ENCODE measurements at regions of chr5 and their contacts with region 1.

Region 1: GRCh38 chr5:93255796-93256195 is 325.2 kb downstream of the NR2F1-AS1 start:
- DNase-seq: no peak
- ATAC-seq: no peak
- H3K4me3 Mint-ChIP-seq: no peak overlapping the region
- H3K27ac Mint-ChIP-seq: no peak overlapping the region
- H3K4me1 Mint-ChIP-seq: no peaks in the 10 kb centered on the region
- H3K27me3 Mint-ChIP-seq: no peaks in the 10 kb centered on the region

Region 2: GRCh38 chr5:93273176-93273575 is 17.4 kb after region 1 on chr5:
- CTCF ChIA-PET with region 1: no interaction called
- POLR2A ChIA-PET with region 1: no interaction called
- intact Hi-C with region 1: loop called in 1 of 2 experiments (anchors 2 kb)
- DNase-seq: no peak
- ATAC-seq: no peak
- H3K4me3 Mint-ChIP-seq: no peak overlapping the region
- H3K27ac Mint-ChIP-seq: no peak overlapping the region
- H3K4me1 Mint-ChIP-seq: no peaks in the 10 kb centered on the region
- H3K27me3 Mint-ChIP-seq: no peaks in the 10 kb centered on the region